ENCODE measurements at regions of chr18 and their contacts with region 1.

Region 1: DNA sequence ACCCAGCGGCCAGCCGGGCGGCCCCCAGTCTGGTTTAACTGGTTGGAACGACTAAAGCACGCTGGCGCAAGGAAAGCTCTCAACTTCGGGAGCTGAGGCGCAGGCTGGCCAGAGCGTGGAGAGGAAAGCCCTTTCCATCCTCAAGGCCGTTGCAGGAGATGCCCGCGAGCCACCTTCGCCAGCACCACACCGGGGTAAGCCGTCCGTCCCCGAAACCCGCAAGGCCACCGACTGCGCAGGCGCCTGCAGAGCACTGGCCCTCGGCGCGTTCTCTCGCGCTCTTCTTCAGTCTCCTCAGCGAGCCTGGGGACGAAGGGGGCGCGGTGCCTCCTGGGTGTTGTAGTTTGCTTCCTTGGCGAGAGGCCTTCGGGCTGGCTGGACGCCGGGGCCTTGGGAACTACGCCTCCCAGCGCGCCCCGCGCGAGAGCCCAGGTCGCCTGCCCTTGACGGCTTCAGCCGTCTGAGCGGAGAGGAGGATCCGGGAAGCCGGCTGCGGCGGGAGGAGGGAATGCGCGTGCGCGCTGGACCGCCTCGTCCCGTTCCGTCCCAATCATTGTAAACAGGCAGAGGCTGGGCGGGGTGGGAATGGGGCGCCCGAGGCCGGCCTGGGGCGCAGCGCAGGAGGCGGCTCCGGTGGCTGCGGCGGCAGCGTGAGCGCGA is at the start of gene RALBP1:
- DNase-seq: peak; percentile 99
- H3K4me3 Mint-ChIP-seq: peak within 1 kb of the TSS; percentile 89
- H3K27ac Mint-ChIP-seq: peak within 1 kb of the TSS; percentile 90
- H3K4me1 Mint-ChIP-seq: peaks cover 26% of the 10 kb centered on the region
- H3K27me3 Mint-ChIP-seq: peaks cover 3% of the 10 kb centered on the region
- total RNA-seq, gene RALBP1: 46.9 to 51.1 TPM

Region 2: DNA sequence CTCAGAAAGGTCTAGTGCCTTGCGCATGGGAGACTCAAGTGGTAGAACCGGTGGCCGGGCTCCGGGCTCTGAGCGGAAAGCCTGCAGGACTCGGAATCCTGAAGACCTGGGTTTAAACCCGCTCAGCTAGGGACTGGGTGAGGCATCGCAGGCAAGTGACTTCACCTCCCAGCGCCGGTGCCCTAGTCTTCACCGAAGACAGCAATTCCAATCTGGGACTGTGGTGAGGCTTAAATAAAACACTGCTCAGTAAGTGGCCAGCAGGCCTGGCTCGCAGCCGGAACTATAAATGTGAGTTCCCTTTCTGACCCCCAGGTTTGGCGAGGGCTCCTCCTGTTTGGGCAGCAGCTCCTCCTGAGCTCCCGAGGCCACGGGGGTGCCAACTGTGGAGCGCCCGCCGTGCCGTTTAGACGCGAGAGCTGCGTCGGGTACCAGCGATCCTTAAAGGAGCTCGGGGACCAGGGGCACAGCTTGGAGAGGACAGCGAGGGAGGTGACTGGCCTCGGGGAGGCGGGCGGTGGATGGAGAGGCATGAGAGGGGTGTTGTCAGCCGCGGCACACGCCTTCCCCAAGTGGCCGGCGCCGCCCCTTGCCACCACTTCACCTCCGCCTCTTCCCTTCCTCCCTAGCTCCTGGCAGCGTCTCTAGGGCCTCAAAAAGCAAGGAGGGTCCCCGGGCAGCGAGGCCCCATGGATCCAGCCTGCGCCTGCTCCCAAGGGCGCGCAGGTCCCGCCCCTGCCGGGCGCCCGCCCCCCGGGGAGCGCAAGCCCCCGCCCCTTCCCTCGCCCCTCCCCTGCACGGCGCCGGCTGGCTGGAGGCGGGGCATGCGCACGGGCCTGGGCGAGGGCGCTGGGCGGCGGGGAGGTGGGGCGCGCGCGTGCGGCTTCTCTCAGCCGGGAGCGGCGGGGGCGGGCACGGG is 770.5 kb before region 1 on chr18:
- CTCF ChIA-PET with region 1: no interaction called
- intact Hi-C with region 1: loop called (anchors 1 kb)
- DNase-seq: peak; percentile 82
- H3K4me3 Mint-ChIP-seq: peak overlapping the region; percentile 80
- H3K27ac Mint-ChIP-seq: no peak overlapping the region
- H3K4me1 Mint-ChIP-seq: peaks cover 12% of the 10 kb centered on the region
- H3K27me3 Mint-ChIP-seq: peaks cover 45% of the 10 kb centered on the region

Region 3: GRCh38 chr18:9095297-9096006 is 379.7 kb before region 1 on chr18:
- CTCF ChIA-PET with region 1: interaction called, 3 read pairs
- intact Hi-C with region 1: loop called (anchors 2 kb)
- DNase-seq: peak; percentile 88
- H3K4me3 Mint-ChIP-seq: peak overlapping the region; percentile 57
- H3K27ac Mint-ChIP-seq: peak overlapping the region; percentile 96
- H3K4me1 Mint-ChIP-seq: peaks cover 63% of the 10 kb centered on the region
- H3K27me3 Mint-ChIP-seq: no peaks in the 10 kb centered on the region

Region 4: DNA sequence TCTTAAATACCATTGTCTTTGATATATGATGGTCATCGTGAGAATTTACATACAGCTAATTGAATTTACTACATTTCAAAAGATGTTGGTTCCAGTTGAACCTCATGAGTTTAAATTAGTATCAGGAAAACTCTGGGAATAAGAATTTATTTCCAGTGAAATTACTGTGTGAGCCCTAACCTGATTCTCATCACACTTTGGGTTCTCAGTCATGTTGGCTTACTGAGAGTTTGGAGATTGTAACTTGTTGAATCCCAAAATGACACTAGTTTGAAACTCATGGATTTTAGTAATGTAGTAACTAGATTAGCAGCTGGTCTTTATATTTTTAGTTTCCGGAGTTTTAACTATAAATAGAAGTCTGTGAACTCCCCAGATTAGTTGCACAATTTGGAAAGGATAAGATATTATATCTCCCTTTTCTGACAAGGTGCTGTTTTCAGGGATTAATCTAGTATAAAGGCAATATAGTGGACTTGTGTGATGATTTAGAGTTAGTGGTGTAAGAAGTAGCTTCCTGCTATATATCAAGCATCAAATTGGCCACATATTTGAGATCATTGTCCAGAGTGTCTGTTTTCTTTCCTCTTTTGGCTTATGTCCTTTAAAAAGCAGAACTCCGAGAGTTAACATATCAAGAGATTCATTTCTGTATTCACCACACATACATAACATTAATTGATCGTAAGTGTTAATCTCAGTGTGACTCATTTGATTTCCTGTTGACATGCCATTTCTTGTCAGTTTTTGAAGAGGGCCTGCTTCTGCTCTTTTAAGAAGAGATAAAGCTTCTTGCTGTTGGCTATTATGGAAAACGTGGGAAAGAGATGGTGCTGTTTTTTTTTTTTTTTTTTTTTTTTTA is 356.9 kb before region 1 on chr18:
- CTCF ChIA-PET with region 1: interaction called, 3 read pairs
- intact Hi-C with region 1: loop called (anchors 1 kb)
- DNase-seq: no peak
- H3K4me3 Mint-ChIP-seq: peak overlapping the region; percentile 57
- H3K27ac Mint-ChIP-seq: peak overlapping the region; percentile 98
- H3K4me1 Mint-ChIP-seq: peaks cover 81% of the 10 kb centered on the region
- H3K27me3 Mint-ChIP-seq: no peaks in the 10 kb centered on the region

Region 5: DNA sequence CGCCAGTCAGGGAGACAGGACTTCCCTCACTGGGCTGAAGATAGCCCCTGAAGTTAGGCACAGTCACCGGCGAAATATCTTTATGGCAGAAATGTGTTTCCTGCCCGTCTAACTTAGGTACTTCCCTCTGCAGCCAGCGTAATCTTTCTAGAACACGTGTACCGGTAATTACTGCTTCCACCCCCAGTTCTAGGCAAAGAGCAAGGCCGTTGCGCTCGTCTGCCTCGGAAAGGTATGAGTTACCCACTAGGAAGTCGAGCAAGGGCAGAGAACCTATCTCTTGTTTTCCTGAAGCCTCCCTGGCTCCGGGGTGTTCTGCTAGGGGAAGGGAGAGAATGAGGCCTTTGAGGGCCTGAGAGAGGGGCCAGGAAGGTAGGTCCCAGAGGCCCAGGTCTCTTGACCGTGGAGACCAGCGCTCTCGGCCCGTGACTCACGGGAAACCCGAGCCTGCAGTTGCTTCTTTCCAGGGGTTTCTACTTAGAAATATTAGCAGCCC is 70.5 kb before region 1 on chr18:
- CTCF ChIA-PET with region 1: no interaction called
- intact Hi-C with region 1: loop called (anchors 1 kb)
- DNase-seq: peak; percentile 68
- H3K4me3 Mint-ChIP-seq: peak overlapping the region; percentile 70
- H3K27ac Mint-ChIP-seq: peak overlapping the region; percentile 57
- H3K4me1 Mint-ChIP-seq: peaks cover 10% of the 10 kb centered on the region
- H3K27me3 Mint-ChIP-seq: no peaks in the 10 kb centered on the region

Region 6: GRCh38 chr18:10525371-10526210 is 1050.5 kb after region 1 on chr18 and contains the start of gene NAPG:
- CTCF ChIA-PET with region 1: no interaction called
- intact Hi-C with region 1: loop called (anchors 2 kb)
- DNase-seq: peak; percentile 88
- H3K4me3 Mint-ChIP-seq: peak within 1 kb of the TSS; percentile 95
- H3K27ac Mint-ChIP-seq: peak within 1 kb of the TSS; percentile 89
- H3K4me1 Mint-ChIP-seq: peaks cover 45% of the 10 kb centered on the region
- H3K27me3 Mint-ChIP-seq: no peaks in the 10 kb centered on the region
- total RNA-seq, gene NAPG: 20.2 to 21.0 TPM